Heart left ventricle (tissue), 16 donors: ENCODE measurements at regions of chr12 and their contacts with region 1.

Region 1: GRCh38 chr12:27542628-27543027 is 18.6 kb downstream of the PPFIBP1 start:
- DNase-seq: no peak
- ATAC-seq: peak in 2 of 4 donors; percentile 46 to 55
- H3K4me3 ChIP-seq: no peak overlapping the region
- H3K27ac ChIP-seq: peak overlapping the region in 10 of 12 donors; percentile 1 to 53 (median 17)
- H3K4me1 ChIP-seq: peaks cover 18 to 86% (median 78%) of the 10 kb centered on the region in 12 donors
- H3K27me3 ChIP-seq: no peaks in the 10 kb centered on the region
- CTCF ChIP-seq: no peak
- POLR2A ChIP-seq: no peak

Region 2: DNA sequence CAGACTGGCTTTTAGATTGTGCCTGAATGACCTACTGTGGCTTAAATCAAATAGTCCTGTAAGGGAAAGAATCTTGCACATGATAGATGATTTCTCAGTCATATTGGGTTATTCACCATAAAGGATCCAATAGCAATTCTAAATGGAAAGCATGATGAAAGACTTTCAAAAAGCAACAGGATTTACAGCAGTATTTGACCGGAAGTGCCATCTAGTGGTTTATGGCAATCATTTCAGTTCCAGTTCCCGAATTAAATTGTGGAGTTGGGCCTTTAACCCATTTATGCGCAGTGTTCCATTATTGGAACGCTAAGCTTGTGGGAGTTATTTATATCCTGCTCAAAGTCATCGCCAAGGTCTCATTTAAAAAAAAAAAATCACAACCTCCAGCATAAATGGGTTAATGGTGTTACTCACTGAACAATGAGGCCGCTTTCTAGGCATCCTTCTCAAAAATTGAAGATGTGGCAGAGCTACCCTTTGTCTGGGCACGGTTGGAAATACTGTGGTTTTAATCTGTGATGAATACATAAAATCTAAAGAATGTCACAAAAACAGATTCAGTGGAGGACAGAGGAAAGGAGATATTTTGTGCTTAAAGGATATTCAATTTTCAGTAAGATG is 92.8 kb after region 1 on chr12:
- intact Hi-C with region 1: loop called in 1 of 10 experiments (anchors 5 kb)
- DNase-seq: no peak
- ATAC-seq: peak in 2 of 4 donors; percentile 24 to 26
- H3K4me3 ChIP-seq: no peak overlapping the region
- H3K27ac ChIP-seq: peak overlapping the region in 1 of 12 donors; percentile 11
- H3K4me1 ChIP-seq: peaks cover 0 to 55% (median 28%) of the 10 kb centered on the region in 12 donors
- H3K27me3 ChIP-seq: no peaks in the 10 kb centered on the region
- CTCF ChIP-seq: peak; percentile 44 to 77 (median 64)
- POLR2A ChIP-seq: no peak